Naive thymus-derived CD4-positive, alpha-beta T cell (primary cell): ENCODE measurements at regions of chr16 and their contacts with region 1.

Region 1: DNA sequence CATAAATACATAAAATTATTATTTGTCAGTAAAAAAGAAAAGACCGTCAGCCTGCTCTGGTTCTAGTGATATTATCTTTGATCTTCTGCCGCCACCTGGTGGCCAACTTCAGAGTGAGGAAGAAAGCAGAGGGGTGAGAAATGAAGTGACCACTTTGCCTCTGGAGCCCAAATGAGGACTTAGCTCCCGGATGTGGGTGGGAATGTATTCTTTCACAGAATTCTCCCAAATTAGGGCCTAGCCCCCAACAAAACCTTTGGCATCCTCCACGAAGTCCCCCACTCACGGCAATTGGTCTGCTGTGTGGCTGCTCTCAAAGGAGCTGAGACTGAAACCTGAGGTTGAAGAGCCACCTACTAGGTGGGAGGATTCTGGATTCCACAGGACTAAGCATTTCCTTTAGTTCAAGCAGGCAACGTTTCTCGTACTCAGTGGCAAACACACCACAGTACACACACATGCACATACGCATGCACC is 4.9 kb upstream of the ZNF267 start:
- DNase-seq: peak; percentile 62 to 81 (median 74)
- ATAC-seq: peak; percentile 20
- H3K4me3 ChIP-seq: peak overlapping the region; percentile 42
- H3K4me3 Mint-ChIP-seq: peak overlapping the region; percentile 67 to 86 (median 74)
- H3K27ac ChIP-seq: peak overlapping the region; percentile 60
- H3K27ac Mint-ChIP-seq: peak overlapping the region; percentile 8 to 95 (median 85)
- H3K4me1 ChIP-seq: peaks cover 32 to 36% of the 10 kb centered on the region in 2 donors
- H3K4me1 Mint-ChIP-seq: peaks cover 27 to 65% (median 50%) of the 10 kb centered on the region in 7 donors
- H3K27me3 ChIP-seq: no peaks in the 10 kb centered on the region
- H3K27me3 Mint-ChIP-seq: peaks cover 0 to 5% (median 0%) of the 10 kb centered on the region in 5 donors

Region 2: DNA sequence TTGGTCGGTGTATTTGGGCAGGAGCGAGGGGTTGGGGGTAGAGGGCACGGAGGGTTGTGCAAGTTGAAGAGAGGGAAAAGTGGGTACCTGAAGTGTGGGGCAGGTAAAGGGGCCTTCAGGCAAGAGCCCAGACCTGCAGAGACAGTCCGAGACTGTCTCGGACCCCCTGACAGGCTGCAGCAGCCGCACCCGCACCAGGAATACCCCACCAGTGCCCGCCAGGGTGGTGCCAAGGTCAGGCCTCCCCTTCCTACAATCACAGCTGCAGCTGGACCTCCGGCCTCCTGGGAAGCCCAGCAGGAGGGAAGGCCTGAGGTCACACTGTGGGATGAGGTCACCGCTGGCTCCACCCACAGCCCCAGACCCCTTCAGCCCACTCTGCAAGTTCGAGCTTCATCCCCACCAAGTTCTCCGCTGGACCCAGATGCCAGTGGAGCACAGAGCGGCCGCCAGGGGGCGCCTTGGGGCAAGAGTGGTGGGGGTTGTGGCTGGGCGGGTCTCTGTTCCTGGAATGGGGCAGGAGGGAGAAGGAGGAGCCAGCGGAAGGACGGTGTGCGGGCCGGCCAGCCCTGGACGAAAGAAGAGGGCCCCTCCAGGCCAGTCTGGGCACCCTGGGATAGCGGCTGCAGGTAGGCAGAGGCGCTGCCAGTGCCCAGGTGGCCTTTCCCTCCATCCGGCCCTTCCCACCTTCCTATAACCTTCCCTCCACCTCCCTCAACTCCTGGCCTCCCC is 883.9 kb before region 1 on chr16 and contains the start of gene HSD3B7:
- CTCF ChIA-PET with region 1: interaction called, 4 read pairs
- POLR2A ChIA-PET with region 1: no interaction called
- intact Hi-C with region 1: loop called in 1 of 2 experiments (anchors 1 kb)
- DNase-seq: peak; percentile 54 to 91 (median 72)
- ATAC-seq: peak; percentile 86
- H3K4me3 ChIP-seq: no peak within 1 kb of the TSS
- H3K4me3 Mint-ChIP-seq: peak within 1 kb of the TSS in 3 of 10 donors; percentile 39 to 54 (median 51)
- H3K27ac ChIP-seq: no peak within 1 kb of the TSS
- H3K27ac Mint-ChIP-seq: peak within 1 kb of the TSS in 2 of 9 donors; percentile 29 to 62
- H3K4me1 ChIP-seq: no peaks in the 10 kb centered on the region
- H3K4me1 Mint-ChIP-seq: peaks cover 0 to 17% (median 0%) of the 10 kb centered on the region in 7 donors
- H3K27me3 ChIP-seq: no peaks in the 10 kb centered on the region
- H3K27me3 Mint-ChIP-seq: no peaks in the 10 kb centered on the region
- total RNA-seq, gene HSD3B7: 0.66 to 7.0 (median 3.3) TPM

Region 3: DNA sequence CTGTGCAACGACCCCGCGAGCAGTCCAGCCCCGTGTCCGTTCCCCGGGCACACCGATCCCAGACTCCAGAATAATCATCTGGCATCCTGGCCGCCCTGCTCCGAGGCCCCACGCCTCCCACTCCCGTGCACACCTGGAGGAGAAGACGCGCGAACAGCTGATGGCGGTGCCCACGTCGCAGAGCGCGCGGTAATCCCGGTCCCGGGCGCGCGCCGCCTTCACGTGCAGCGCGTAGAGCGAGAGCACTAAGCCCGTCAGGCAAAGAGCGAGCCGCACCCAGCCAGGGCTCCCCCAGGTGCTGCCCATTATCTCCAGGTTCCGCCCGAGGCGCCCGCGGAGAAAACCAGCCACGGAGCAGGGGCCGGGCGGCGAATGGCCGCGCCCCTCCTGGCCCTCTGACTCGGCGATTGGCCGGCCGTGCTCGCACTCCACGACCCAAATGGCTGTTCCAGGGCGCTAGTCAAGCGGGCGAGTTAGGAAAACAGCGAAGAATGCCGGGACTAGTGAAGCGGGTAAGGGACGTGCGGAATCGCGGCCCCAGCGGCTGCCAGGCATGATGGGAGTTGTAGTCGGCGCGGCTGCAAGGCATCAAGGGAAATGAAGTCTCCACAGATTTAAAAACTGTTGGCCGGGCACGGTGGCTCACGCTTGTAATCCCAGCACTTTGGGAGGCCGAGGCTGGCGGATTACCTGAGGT is 774.2 kb before region 1 on chr16 and contains the start of gene VKORC1:
- CTCF ChIA-PET with region 1: no interaction called
- POLR2A ChIA-PET with region 1: no interaction called
- intact Hi-C with region 1: loop called in 1 of 2 experiments (anchors 5 kb)
- DNase-seq: peak; percentile 66 to 89 (median 88)
- ATAC-seq: peak; percentile 93
- H3K4me3 ChIP-seq: peak within 1 kb of the TSS; percentile 99
- H3K4me3 Mint-ChIP-seq: peak within 1 kb of the TSS; percentile 92 to 99 (median 94)
- H3K27ac ChIP-seq: peak within 1 kb of the TSS; percentile 85
- H3K27ac Mint-ChIP-seq: peak within 1 kb of the TSS; percentile 67 to 95 (median 91)
- H3K4me1 ChIP-seq: peaks cover 14 to 18% of the 10 kb centered on the region in 2 donors
- H3K4me1 Mint-ChIP-seq: peaks cover 14 to 42% (median 29%) of the 10 kb centered on the region in 7 donors
- H3K27me3 ChIP-seq: no peaks in the 10 kb centered on the region
- H3K27me3 Mint-ChIP-seq: no peaks in the 10 kb centered on the region
- total RNA-seq, gene VKORC1: 29.5 to 69.3 (median 35.6) TPM

Region 4: GRCh38 chr16:31108794-31109558 is 759.8 kb before region 1 on chr16:
- CTCF ChIA-PET with region 1: no interaction called
- POLR2A ChIA-PET with region 1: no interaction called
- intact Hi-C with region 1: no loop called
- DNase-seq: no peak
- ATAC-seq: no peak
- H3K4me3 ChIP-seq: peak overlapping the region; percentile 74
- H3K4me3 Mint-ChIP-seq: peak overlapping the region; percentile 62 to 91 (median 80)
- H3K27ac ChIP-seq: peak overlapping the region; percentile 82
- H3K27ac Mint-ChIP-seq: peak overlapping the region in 7 of 9 donors; percentile 51 to 88 (median 69)
- H3K4me1 ChIP-seq: peaks cover 4 to 16% of the 10 kb centered on the region in 2 donors
- H3K4me1 Mint-ChIP-seq: peaks cover 10 to 38% (median 19%) of the 10 kb centered on the region in 7 donors
- H3K27me3 ChIP-seq: no peaks in the 10 kb centered on the region
- H3K27me3 Mint-ChIP-seq: no peaks in the 10 kb centered on the region

Region 5: DNA sequence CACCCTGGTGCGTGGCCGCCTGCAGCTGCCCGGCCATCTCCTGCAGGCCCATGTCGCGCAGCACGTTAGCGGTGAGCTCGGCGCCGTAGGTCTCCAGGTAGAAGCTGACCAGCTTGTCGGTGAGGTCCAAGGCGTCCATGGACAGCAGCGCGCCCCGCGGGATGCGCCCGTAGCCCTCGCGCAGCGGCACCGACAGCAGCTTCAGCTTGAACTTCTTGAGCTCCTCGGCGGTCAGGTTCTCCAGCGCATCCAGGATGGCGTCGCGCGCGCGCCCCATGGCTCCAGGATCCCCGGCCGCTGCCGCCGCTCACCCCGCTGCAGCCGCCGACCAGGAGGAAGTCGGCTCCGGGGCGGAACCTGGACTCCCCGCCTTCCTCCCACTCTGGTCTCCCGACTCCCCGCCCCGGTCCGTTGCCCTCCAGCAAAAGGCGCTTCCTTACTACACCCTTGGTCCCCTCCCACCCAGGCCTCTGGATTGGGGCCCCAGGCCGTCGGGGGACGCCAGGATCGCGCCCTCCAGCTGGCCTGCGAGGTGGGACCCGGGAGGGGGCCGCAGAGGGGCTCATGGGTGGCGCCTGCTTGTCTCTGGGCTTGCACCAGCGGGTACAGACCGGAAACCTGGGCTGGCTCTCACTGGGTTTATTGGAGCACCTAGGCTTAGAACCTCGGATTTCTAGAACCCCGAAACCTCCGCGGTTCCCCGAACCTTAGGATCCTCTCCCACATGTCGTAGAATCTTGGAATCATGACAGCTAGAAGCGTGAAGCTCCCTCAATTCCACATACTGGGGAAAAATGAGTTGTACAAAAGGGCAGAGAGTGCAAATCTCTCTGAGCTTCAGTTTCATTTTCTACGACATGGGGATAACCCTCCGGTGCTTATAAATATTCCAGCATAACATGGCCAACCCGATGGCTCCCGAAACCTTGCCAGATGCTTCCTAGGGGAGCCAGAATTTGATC is 666.0 kb before region 1 on chr16 and contains the start of gene PYCARD:
- CTCF ChIA-PET with region 1: no interaction called
- POLR2A ChIA-PET with region 1: interaction called, 3 read pairs
- intact Hi-C with region 1: loop called (anchors 5 kb)
- DNase-seq: peak in 6 of 9 donors; percentile 28 to 56 (median 38)
- ATAC-seq: peak; percentile 44
- H3K4me3 ChIP-seq: peak within 1 kb of the TSS; percentile 87
- H3K4me3 Mint-ChIP-seq: peak within 1 kb of the TSS; percentile 71 to 93 (median 90)
- H3K27ac ChIP-seq: peak within 1 kb of the TSS; percentile 73
- H3K27ac Mint-ChIP-seq: peak within 1 kb of the TSS; percentile 68 to 88 (median 85)
- H3K4me1 ChIP-seq: peaks cover 19 to 20% of the 10 kb centered on the region in 2 donors
- H3K4me1 Mint-ChIP-seq: peaks cover 33 to 56% (median 46%) of the 10 kb centered on the region in 7 donors
- H3K27me3 ChIP-seq: no peaks in the 10 kb centered on the region
- H3K27me3 Mint-ChIP-seq: peaks cover 0 to 7% (median 0%) of the 10 kb centered on the region in 5 donors
- total RNA-seq, gene PYCARD: 13.0 to 80.1 (median 21.2) TPM

Region 6: DNA sequence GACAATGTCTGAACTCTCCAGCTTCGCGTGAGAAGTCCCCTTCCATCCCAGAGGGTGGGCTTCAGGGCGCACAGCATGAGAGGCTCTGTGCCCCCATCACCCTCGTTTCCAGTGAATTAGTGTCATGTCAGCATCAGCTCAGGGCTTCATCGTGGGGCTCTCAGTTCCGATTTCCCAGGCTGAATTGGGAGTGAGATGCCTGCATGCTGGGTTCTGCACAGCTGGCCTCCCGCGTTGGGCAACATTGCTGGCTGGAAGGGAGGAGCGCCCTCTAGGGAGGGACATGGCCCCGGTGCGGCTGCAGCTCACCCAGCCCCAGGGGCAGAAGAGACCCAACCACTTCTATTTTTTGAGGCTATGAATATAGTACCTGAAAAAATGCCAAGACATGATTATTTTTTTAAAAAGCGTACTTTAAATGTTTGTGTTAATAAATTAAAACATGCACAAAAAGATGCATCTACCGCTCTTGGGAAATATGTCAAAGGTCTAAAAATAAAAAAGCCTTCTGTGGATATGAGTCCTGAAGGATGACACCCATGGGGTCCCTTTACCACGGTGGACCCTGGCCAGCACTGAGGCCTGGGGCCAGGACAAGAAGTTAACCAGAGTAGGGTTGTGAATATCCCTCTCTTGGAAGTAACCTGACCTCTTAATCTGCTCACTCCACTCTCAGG is 486.1 kb before region 1 on chr16:
- CTCF ChIA-PET with region 1: no interaction called
- POLR2A ChIA-PET with region 1: no interaction called
- intact Hi-C with region 1: loop called (anchors 5 kb)
- DNase-seq: peak; percentile 24 to 75 (median 47)
- ATAC-seq: peak; percentile 82
- H3K4me3 ChIP-seq: no peak overlapping the region
- H3K4me3 Mint-ChIP-seq: no peak overlapping the region
- H3K27ac ChIP-seq: no peak overlapping the region
- H3K27ac Mint-ChIP-seq: peak overlapping the region in 1 of 9 donors; percentile 22
- H3K4me1 ChIP-seq: peaks cover 0 to 3% of the 10 kb centered on the region in 2 donors
- H3K4me1 Mint-ChIP-seq: peaks cover 0 to 23% (median 4%) of the 10 kb centered on the region in 7 donors
- H3K27me3 ChIP-seq: peaks cover 0 to 4% of the 10 kb centered on the region in 2 donors
- H3K27me3 Mint-ChIP-seq: peaks cover 0 to 8% (median 4%) of the 10 kb centered on the region in 5 donors

Region 7: DNA sequence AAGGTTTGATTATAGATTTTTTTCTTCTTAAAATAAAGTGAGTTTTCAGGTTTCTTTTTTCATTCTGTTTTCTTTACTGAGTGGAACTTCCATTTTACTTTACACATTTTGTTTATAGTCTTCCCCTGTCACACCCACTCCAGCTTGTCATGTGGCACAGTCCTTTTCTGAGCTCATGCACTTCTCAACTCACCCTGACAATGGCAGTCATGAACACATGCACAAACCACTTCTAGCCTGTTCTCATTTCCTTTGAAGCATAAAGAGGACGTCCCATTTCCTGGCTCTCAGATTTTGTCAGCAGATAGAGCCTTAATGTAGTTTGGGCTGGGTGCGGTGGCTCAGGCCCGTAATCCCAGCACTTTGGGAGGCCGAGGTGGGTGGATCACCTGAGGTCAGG is 173.1 kb before region 1 on chr16:
- CTCF ChIA-PET with region 1: interaction called, 3 read pairs
- POLR2A ChIA-PET with region 1: interaction called, 9 read pairs
- intact Hi-C with region 1: loop called (anchors 1 to 2 kb)
- DNase-seq: peak in 7 of 9 donors; percentile 73 to 91 (median 84)
- ATAC-seq: peak; percentile 92
- H3K4me3 ChIP-seq: no peak overlapping the region
- H3K4me3 Mint-ChIP-seq: no peak overlapping the region
- H3K27ac ChIP-seq: no peak overlapping the region
- H3K27ac Mint-ChIP-seq: no peak overlapping the region
- H3K4me1 ChIP-seq: peaks cover 14 to 25% of the 10 kb centered on the region in 2 donors
- H3K4me1 Mint-ChIP-seq: peaks cover 0 to 18% (median 15%) of the 10 kb centered on the region in 7 donors
- H3K27me3 ChIP-seq: no peaks in the 10 kb centered on the region
- H3K27me3 Mint-ChIP-seq: peaks cover 0 to 26% (median 0%) of the 10 kb centered on the region in 5 donors

Region 8: GRCh38 chr16:31880322-31880979 is 11.7 kb after region 1 on chr16:
- CTCF ChIA-PET with region 1: interaction called, 10 read pairs
- POLR2A ChIA-PET with region 1: interaction called, 17 read pairs
- intact Hi-C with region 1: loop called in 1 of 2 experiments (anchors 1 kb)
- DNase-seq: peak in 1 of 9 donors; percentile 35
- ATAC-seq: peak; percentile 54
- H3K4me3 ChIP-seq: no peak overlapping the region
- H3K4me3 Mint-ChIP-seq: peak overlapping the region in 8 of 10 donors; percentile 2 to 89 (median 34)
- H3K27ac ChIP-seq: peak overlapping the region; percentile 35
- H3K27ac Mint-ChIP-seq: peak overlapping the region; percentile 53 to 96 (median 75)
- H3K4me1 ChIP-seq: peaks cover 45 to 53% of the 10 kb centered on the region in 2 donors
- H3K4me1 Mint-ChIP-seq: peaks cover 53 to 96% (median 89%) of the 10 kb centered on the region in 7 donors
- H3K27me3 ChIP-seq: no peaks in the 10 kb centered on the region
- H3K27me3 Mint-ChIP-seq: no peaks in the 10 kb centered on the region